ENCODE measurements at regions of chr3 and their contacts with region 1.

Region 1: GRCh38 chr3:114418724-114419543 is 125.1 kb downstream of the TIGIT start:
- DNase-seq: no peak

Region 2: GRCh38 chr3:114383875-114384557 is 34.9 kb before region 1 on chr3:
- intact Hi-C with region 1: loop called in 1 of 2 experiments (anchors 5 kb)
- DNase-seq: peak; percentile 90

Region 3: DNA sequence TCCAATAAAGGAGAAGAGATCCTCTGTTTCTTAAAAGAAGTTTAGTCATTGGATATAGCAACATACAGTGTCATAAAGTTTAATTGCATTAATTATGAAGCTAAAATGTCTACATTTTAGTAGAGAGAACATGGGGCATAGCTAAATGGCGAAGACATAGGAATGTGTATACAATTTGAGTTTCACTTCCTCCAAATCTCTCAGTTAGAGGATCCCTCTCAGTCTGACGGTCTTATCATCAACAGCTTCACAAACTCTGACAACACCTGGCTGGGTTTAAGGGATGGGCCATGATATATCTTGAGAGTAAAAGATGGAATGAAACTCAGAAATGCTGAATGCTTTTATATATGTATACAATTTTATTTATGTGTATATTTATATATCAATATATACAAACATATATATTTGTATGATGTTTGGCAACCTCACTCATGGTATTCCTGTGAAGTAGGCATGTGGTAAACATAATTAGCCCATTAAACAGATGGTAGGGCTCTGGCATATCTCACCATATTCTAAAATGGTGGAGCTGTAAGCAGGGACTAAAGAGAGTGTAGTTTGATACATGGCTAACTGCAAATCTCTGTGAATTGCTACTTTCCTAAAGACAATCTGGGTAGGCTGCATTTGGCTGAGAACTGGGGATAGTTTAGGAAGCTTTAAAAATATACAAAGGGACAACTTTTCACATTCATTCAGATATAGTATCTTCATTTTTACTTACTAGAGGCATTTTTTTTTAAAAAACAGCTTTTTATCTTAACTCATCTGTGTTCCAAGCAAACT is 13.5 kb before region 1 on chr3:
- intact Hi-C with region 1: no loop called
- DNase-seq: no peak

Region 4: DNA sequence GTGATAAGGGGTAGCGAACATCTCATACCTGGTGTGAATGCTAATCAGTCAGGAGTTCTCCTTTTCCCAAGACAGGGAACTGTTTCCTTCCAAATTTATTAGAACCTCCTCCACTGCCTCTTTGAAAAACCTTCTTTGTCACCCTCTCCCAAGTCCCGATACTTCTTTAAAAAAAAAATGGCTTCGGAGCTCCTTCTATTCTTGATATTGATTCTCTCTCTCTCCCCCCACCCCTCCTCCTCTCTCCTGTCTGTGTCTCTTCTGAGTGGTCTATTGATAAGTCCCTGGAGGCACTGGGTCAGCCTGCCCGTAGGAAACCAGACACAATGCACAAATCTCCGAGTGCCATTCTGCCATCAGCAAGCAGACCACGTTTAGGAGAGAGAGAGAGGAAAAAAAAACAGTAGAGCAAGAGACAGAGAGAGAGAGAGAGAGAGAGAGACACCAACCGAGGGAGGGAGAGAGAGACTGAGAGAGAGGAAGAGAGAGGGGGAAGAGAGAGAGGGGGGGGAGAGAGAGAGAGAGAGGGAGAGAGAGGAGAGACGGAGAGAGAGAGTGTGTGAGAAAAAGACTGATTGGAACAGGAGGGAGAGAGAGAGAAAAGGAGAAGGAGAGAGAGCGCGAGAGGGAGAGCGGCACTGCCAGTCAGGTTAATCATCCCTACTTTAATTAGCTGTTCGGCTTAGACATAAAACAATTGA is 35.8 kb after region 1 on chr3:
- intact Hi-C with region 1: loop called in 1 of 2 experiments (anchors 5 kb)
- DNase-seq: no peak